ENCODE measurements at regions of chr1 and their contacts with region 1.

Region 1: GRCh38 chr1:173429471-173430402 is 47.4 kb upstream of the PRDX6 start:
- DNase-seq: peak; percentile 42
- H3K4me3 Mint-ChIP-seq: peak overlapping the region; percentile 38
- H3K27ac Mint-ChIP-seq: peak overlapping the region; percentile 47
- H3K4me1 Mint-ChIP-seq: peaks cover 18% of the 10 kb centered on the region
- H3K27me3 Mint-ChIP-seq: no peaks in the 10 kb centered on the region

Region 2: GRCh38 chr1:173444757-173445156 is 15.0 kb after region 1 on chr1:
- intact Hi-C with region 1: no loop called
- DNase-seq: no peak
- H3K4me3 Mint-ChIP-seq: no peak overlapping the region
- H3K27ac Mint-ChIP-seq: no peak overlapping the region
- H3K4me1 Mint-ChIP-seq: peaks cover 12% of the 10 kb centered on the region
- H3K27me3 Mint-ChIP-seq: no peaks in the 10 kb centered on the region

Region 3: GRCh38 chr1:173714759-173715537 is 285.2 kb after region 1 on chr1 and contains the start of gene KLHL20:
- intact Hi-C with region 1: loop called (anchors 1 kb)
- DNase-seq: peak; percentile 83
- H3K4me3 Mint-ChIP-seq: peak within 1 kb of the TSS; percentile 97
- H3K27ac Mint-ChIP-seq: peak within 1 kb of the TSS; percentile 94
- H3K4me1 Mint-ChIP-seq: peaks cover 18% of the 10 kb centered on the region
- H3K27me3 Mint-ChIP-seq: peaks cover 14% of the 10 kb centered on the region
- total RNA-seq, gene KLHL20: 15.4 and 17.6 TPM in 2 replicates

Region 4: GRCh38 chr1:173824331-173825081 is 394.8 kb after region 1 on chr1 and contains the starts of genes CENPL and DARS2:
- intact Hi-C with region 1: loop called (anchors 2 kb)
- DNase-seq: peak; percentile 91
- H3K4me3 Mint-ChIP-seq: peak within 1 kb of the TSS; percentile 98
- H3K27ac Mint-ChIP-seq: peak within 1 kb of the TSS; percentile 99
- H3K4me1 Mint-ChIP-seq: peaks cover 36% of the 10 kb centered on the region
- H3K27me3 Mint-ChIP-seq: no peaks in the 10 kb centered on the region
- total RNA-seq, gene CENPL: 26.1 and 26.2 TPM in 2 replicates
- total RNA-seq, gene DARS2: 49.7 and 49.9 TPM in 2 replicates

Region 5: GRCh38 chr1:174022080-174022975 is 592.6 kb after region 1 on chr1 and contains the start of gene RC3H1:
- intact Hi-C with region 1: loop called (anchors 2 kb)
- DNase-seq: peak; percentile 85
- H3K4me3 Mint-ChIP-seq: peak within 1 kb of the TSS; percentile 99
- H3K27ac Mint-ChIP-seq: peak within 1 kb of the TSS; percentile 90
- H3K4me1 Mint-ChIP-seq: peaks cover 35% of the 10 kb centered on the region
- H3K27me3 Mint-ChIP-seq: peaks cover 2% of the 10 kb centered on the region
- total RNA-seq, gene RC3H1: 30.4 and 33.5 TPM in 2 replicates

Region 6: GRCh38 chr1:174217787-174218574 is 788.2 kb after region 1 on chr1:
- intact Hi-C with region 1: loop called (anchors 5 kb)
- DNase-seq: no peak
- H3K4me3 Mint-ChIP-seq: no peak overlapping the region
- H3K27ac Mint-ChIP-seq: no peak overlapping the region
- H3K4me1 Mint-ChIP-seq: no peaks in the 10 kb centered on the region
- H3K27me3 Mint-ChIP-seq: no peaks in the 10 kb centered on the region

Measured in activated T-helper 2 cell treated with anti-CD3 and anti-CD28 coated beads, Interferon-gamma antibody, Interleukin-2, Interleukin-4, amounts not matched to agents 10 μg/mL and 5 μg/mL and 100 μg/mL, durations not matched to agents 14 hours and 24 hours and 36 hours (primary cell).